ENCODE measurements at regions of chr11 and their contacts with region 1.

Region 1: GRCh38 chr11:109960831-109961230 is 132.4 kb upstream of the ZC3H12C start:
- DNase-seq: no peak
- ATAC-seq: no peak
- H3K4me3 ChIP-seq: no peak overlapping the region
- H3K27ac ChIP-seq: no peak overlapping the region
- H3K4me1 ChIP-seq: peaks cover 15% of the 10 kb centered on the region
- H3K27me3 ChIP-seq: no peaks in the 10 kb centered on the region
- CTCF ChIP-seq: no peak
- EP300 ChIP-seq: no peak
- POLR2A ChIP-seq: no peak
- RAD21 ChIP-seq: no peak

Region 2: GRCh38 chr11:110000031-110000502 is 39.2 kb after region 1 on chr11:
- CTCF ChIA-PET with region 1: interaction called, 9 read pairs
- POLR2A ChIA-PET with region 1: interaction called, 13 read pairs
- RAD21 ChIA-PET with region 1: interaction called, 18 read pairs
- SMC1A ChIA-PET with region 1: interaction called, 85 read pairs
- in situ Hi-C with region 1: no loop called
- intact Hi-C with region 1: no loop called
- DNase-seq: peak; percentile 92
- ATAC-seq: peak; percentile 96
- H3K4me3 ChIP-seq: no peak overlapping the region
- H3K27ac ChIP-seq: peak overlapping the region; percentile 62; the same call in 1 of the 2 replicates
- H3K4me1 ChIP-seq: peaks cover 19% of the 10 kb centered on the region
- H3K27me3 ChIP-seq: no peaks in the 10 kb centered on the region
- CTCF ChIP-seq: no peak
- EP300 ChIP-seq: peak; percentile 100
- POLR2A ChIP-seq: no peak
- RAD21 ChIP-seq: peak; percentile 43; the same call in 1 of the 2 replicates

Region 3: DNA sequence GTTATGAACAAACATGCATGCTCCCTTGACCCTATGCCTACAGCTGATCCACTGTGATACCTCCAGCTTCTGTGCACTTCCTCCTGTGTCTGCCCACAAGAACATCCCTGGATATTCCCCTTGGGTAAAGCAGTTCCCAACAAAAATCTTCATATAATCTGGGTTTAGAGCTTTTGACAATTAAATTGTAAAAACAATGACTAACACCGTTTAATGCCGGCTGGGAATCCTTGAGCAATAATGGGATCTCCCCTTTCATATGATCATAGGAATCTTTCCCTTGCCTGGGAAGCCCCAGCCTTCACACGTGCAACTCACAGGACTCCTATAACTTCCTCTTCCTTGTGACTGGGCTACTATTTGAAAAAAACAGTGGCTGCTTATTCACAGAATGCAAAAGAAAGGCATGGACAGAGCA is 126.1 kb after region 1 on chr11:
- CTCF ChIA-PET with region 1: interaction called, 3 read pairs
- POLR2A ChIA-PET with region 1: interaction called, 4 read pairs
- RAD21 ChIA-PET with region 1: interaction called, 4 read pairs
- SMC1A ChIA-PET with region 1: interaction called, 16 read pairs
- in situ Hi-C with region 1: no loop called
- intact Hi-C with region 1: no loop called
- DNase-seq: no peak
- ATAC-seq: 0 out of 3 replicates have a peak, but pooled peaks have one; percentile 3
- H3K4me3 ChIP-seq: no peak overlapping the region
- H3K27ac ChIP-seq: no peak overlapping the region
- H3K4me1 ChIP-seq: peaks cover 10% of the 10 kb centered on the region
- H3K27me3 ChIP-seq: no peaks in the 10 kb centered on the region
- CTCF ChIP-seq: no peak
- EP300 ChIP-seq: no peak
- POLR2A ChIP-seq: no peak
- RAD21 ChIP-seq: no peak

Region 4: GRCh38 chr11:110098645-110099044 is 137.8 kb after region 1 on chr11:
- CTCF ChIA-PET with region 1: interaction called, 3 read pairs
- POLR2A ChIA-PET with region 1: interaction called, 10 read pairs
- RAD21 ChIA-PET with region 1: interaction called, 14 read pairs
- SMC1A ChIA-PET with region 1: interaction called, 12 read pairs
- in situ Hi-C with region 1: no loop called
- intact Hi-C with region 1: no loop called
- DNase-seq: no peak
- ATAC-seq: peak; percentile 78
- H3K4me3 ChIP-seq: no peak overlapping the region
- H3K27ac ChIP-seq: no peak overlapping the region
- H3K4me1 ChIP-seq: peaks cover 11% of the 10 kb centered on the region; the same call in 1 of the 2 replicates
- H3K27me3 ChIP-seq: no peaks in the 10 kb centered on the region
- CTCF ChIP-seq: peak; percentile 23 to 41 (median 25); a peak in 3 of 6 replicates
- EP300 ChIP-seq: peak in 1 of 2 experiments; percentile 30; a peak in 1 of 4 replicates
- POLR2A ChIP-seq: no peak
- RAD21 ChIP-seq: peak; percentile 57

Measured in GM12878 (cell line).